HEK293T (cell line): ENCODE measurements at regions of chr5 and their contacts with region 1.

Region 1: DNA sequence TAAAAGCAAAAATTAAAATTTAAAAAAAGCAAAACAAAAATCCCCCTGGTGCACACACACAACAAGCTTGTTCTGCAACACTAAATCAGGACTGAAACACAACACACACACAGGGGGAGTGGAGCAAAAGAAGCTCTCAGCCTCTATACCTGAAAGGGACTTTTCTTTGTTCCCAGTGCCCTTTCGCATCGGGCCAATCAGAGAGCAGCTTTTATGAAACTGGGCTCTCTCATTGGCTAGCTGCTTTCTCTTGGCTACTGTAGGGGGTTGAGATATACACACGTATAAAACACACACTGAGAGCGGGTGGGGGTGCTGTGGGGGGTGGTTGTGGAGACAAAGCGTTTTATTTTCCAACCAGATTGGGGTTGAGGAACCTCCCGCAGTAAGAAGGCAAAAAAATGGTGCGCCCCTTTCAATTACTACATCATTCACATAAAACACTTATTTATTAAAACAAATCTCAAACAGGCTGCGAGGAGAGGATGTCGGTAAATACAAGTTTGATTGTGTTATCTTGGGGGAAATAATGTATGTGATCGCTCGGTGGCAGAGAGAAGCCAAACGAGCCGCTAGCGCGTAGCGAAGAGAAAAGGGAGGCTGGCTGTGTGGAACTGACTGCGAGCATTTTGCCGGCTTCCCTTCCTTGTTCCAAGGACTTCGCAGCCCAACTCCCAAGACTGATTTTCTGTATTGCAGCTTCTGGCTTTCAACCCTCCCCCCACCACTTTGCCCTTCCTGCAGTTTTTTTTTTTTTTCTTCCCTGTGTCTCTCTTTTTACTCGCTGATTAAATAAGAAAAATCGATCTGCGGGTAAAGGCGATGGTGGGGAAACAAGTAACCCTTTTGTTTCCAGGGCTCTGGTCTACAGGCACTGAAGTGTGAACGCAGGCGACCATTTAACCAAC is 2.5 kb upstream of the ZNF608 start:
- DNase-seq: peak; percentile 74

Region 2: DNA sequence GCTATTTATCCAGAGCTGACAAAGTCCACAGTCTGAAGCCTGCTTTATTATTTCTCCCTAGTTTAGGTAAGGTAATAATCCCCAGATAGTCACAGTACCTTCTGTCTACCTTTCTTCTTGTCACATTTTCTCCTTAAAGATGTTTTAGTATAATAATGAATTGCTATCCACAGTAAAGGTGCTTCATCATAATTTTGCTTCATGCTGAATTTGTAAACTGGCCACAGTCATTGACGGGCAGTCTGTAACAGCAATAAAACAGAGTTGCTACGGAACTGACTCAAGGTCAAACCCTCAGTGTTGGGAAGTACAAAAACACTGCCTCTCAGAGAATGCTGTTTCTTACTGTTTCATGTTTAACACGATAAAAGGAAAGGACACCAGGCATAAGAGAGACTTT is 198.2 kb before region 1 on chr5:
- CTCF ChIA-PET with region 1: no interaction called
- POLR2A ChIA-PET with region 1: no interaction called
- DNase-seq: no peak

Region 3: DNA sequence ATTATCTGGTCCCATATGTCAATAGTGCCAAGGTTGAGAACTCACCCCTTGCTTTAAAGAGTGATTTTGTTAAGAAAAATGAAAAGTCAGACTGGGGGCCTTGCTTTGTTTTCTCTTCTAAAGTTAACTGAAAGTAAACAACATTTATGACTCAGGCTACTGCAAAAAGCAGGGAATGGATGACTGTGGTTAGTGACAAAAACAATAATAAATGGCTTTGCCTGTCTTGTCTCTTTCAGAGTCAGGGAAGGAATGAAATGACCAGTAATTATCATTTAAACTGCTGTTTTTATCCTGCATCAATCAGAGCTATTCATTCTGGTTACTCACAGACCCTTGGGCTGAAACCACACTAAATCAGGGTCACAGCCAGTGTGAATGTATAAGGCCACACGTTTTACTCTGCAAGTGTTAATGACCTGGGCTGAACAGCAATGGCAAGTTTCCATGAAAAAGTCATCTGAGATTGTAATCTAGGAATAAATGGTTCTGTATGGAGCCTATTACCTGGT is 114.7 kb before region 1 on chr5:
- CTCF ChIA-PET with region 1: no interaction called
- POLR2A ChIA-PET with region 1: no interaction called
- DNase-seq: no peak

Region 4: GRCh38 chr5:124706729-124707361 is 42.1 kb before region 1 on chr5:
- CTCF ChIA-PET with region 1: interaction called, 3 read pairs
- POLR2A ChIA-PET with region 1: interaction called, 14 read pairs
- DNase-seq: peak; percentile 42

Region 5: DNA sequence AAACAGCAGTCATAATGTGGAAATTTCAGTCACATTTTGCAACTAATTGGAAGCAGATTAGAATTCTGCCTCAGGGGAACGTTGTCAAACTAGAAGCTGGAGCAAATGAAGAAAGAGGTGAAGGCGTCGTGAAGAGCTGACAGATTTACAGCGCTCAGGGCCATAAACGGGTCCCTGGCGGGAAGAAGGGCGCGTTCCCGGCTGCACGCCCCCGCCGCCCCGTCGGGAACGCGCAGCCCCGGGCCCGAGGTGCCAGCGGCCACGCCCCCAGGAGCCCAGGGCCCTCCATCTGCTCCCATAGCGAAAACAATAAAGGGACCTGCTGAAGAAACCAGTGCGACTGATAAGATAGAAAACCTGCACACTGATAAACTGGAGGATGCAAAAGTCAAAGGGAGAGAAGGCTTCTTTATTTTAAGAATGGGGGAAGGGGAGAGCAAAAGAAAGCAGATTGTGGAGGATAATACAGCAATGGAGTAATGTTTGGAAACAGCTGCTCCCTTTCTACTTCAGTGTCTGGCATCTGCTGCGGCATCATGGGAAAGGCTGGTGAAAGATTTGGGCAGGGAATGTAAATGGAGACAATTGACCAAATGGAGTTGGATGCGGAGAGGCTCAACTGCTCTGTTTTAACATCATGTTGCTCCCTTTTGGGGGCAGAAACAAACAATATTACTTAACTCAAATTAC is 13.6 kb before region 1 on chr5:
- CTCF ChIA-PET with region 1: interaction called, 3 read pairs
- POLR2A ChIA-PET with region 1: interaction called, 50 read pairs
- DNase-seq: peak; percentile 80

Region 6: DNA sequence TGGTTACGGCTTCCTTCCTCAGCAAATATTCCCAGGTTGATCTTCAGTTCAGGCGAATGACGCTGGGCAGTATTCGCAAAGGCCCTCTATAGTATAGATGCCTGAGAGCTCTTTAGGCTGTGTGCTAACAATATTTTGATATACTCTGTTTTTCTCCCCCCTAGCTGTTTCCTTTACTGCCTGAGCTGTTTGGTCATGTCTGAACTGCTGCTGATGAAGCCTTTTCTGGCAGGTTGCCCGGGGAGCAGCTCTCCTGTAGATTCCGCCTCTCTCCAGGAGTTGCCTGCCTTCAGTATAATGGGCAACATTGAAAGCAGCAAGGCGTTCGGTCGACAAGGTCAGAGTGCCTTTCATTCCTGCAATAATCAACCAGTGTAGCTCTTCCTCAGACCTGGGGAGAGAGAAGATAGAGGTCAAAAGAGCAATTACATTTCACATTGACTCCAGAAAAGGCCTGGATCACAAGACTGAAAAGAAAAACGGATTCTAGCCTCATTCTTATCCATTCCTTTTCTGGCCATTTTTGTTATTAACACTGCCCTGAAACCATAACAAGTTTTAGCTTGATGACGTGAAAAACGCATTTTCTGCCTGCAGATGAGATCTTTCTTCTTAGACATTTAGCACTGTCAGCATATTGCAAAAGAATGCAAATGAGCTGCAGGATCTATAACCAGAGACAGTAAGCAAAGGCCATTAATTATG is 57.6 kb after region 1 on chr5:
- CTCF ChIA-PET with region 1: no interaction called
- POLR2A ChIA-PET with region 1: interaction called, 19 read pairs
- DNase-seq: peak; percentile 79

Region 7: GRCh38 chr5:125026896-125027732 is 278.2 kb after region 1 on chr5:
- CTCF ChIA-PET with region 1: no interaction called
- POLR2A ChIA-PET with region 1: no interaction called
- DNase-seq: no peak

Region 8: GRCh38 chr5:125408582-125409505 is 659.9 kb after region 1 on chr5:
- CTCF ChIA-PET with region 1: no interaction called
- POLR2A ChIA-PET with region 1: interaction called, 11 read pairs
- DNase-seq: peak; percentile 39